Endothelial cell of umbilical vein (primary cell): ENCODE measurements at regions of chr10 and their contacts with region 1.

Region 1: DNA sequence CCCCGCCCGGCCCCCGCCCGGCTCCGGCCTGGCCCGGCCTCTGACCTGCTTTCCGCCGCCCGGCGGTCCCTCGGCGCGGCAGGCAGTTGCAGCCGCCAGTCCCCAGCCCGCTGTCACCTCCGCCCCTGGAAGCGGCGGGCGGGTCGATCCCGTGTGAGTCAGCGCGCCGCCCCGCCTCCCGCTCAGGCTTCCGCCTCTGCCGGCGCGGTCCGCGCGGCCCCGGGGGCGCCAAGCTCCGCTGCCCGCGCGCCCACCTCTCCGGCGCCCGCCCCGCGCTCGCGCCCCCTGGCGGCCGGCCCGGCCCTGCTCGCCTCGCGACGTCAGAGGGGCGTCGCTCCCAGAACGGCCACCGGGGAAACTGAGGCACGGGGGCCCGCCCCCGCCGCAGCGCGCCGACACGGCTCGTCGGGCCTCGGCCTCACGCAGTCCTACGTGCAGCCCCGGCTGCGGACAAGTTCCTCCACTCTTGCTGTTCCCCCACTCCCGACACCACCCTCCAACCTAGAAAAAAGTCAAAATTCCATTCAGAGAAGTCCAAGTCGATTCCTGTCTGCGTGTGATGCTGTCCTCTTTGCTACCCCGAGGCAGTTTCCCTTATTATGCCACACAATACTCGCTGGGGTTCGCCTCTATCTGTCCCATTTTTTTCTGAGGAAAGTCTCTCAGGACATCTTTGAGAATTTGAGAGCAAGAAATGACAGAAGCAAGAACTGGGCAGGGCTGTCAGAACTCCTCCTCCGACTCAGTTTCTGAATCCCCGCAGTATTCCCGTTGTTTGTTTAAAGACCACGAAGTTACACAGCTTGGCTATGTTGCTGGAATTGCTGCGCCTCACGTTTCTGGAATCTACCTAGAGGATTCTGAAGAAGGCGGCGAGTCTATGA is at the start of gene DNMBP:
- DNase-seq: peak; percentile 83
- H3K4me3 ChIP-seq: peak within 1 kb of the TSS; percentile 75 to 99 (median 96)
- H3K27ac ChIP-seq: peak within 1 kb of the TSS; percentile 83
- H3K4me1 ChIP-seq: peaks cover 31% of the 10 kb centered on the region
- H3K27me3 ChIP-seq: no peaks in the 10 kb centered on the region
- CTCF ChIP-seq: peak; percentile 37 to 63
- POLR2A ChIP-seq: peak; percentile 74
- total RNA-seq, gene DNMBP: 53.4 and 56.1 TPM in 2 replicates

Region 2: DNA sequence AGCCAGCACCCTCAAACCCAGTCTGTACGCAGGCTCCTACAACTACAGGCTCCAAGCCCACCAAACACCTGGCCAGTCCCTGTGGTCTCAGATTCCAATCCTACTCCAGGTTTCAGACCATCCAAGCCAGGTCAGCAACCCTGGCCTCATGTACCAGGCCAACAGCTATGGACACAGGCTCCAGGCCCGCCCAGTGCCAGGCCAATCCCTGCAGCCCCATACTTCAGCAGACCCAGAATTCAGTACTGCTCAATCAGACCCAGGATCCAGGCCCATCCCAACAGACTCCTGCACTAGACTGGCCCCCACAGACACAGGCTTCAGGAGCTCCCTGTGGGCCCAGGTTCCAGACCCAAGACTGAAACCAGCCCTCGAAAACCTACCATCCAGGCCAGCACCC is 806.7 kb before region 1 on chr10:
- CTCF ChIA-PET with region 1: no interaction called
- POLR2A ChIA-PET with region 1: no interaction called
- dilution Hi-C with region 1: no loop called
- intact Hi-C with region 1: no loop called
- DNase-seq: no peak
- H3K4me3 ChIP-seq: no peak overlapping the region
- H3K27ac ChIP-seq: no peak overlapping the region
- H3K4me1 ChIP-seq: no peaks in the 10 kb centered on the region
- H3K27me3 ChIP-seq: no peaks in the 10 kb centered on the region
- CTCF ChIP-seq: no peak
- POLR2A ChIP-seq: no peak

Region 3: DNA sequence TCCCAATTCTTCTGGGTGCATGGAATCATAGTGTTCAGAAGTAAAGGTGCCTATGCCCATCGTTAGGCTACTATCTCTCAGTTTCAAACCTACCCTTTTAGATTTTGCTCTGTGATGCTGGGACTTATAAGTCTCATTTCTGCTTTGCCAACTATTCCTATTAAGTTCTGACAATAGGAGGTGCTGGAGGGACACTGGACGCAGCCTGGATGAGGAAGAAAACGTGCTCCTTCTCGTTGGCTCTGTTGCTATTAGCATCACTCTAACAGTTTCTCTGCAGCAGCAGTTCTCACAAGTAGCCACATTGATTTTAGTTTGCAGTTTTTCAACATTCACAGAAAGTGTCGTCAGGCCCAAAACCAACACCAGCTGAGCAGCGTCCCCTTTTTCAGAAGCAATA is 155.2 kb before region 1 on chr10:
- CTCF ChIA-PET with region 1: interaction called, 11 read pairs
- POLR2A ChIA-PET with region 1: no interaction called
- dilution Hi-C with region 1: no loop called
- intact Hi-C with region 1: loop called (anchors 1 kb)
- DNase-seq: peak; percentile 91
- H3K4me3 ChIP-seq: no peak overlapping the region
- H3K27ac ChIP-seq: no peak overlapping the region
- H3K4me1 ChIP-seq: no peaks in the 10 kb centered on the region
- H3K27me3 ChIP-seq: no peaks in the 10 kb centered on the region
- CTCF ChIP-seq: peak; percentile 53 to 66
- POLR2A ChIP-seq: no peak

Region 4: GRCh38 chr10:99917963-99918825 is 91.8 kb before region 1 on chr10:
- CTCF ChIA-PET with region 1: interaction called, 14 read pairs
- POLR2A ChIA-PET with region 1: interaction called, 6 read pairs
- dilution Hi-C with region 1: no loop called
- intact Hi-C with region 1: no loop called
- DNase-seq: peak; percentile 90
- H3K4me3 ChIP-seq: peak overlapping the region in 1 of 3 experiments; percentile 10
- H3K27ac ChIP-seq: peak overlapping the region; percentile 67
- H3K4me1 ChIP-seq: peaks cover 66% of the 10 kb centered on the region
- H3K27me3 ChIP-seq: no peaks in the 10 kb centered on the region
- CTCF ChIP-seq: no peak
- POLR2A ChIP-seq: no peak

Region 5: GRCh38 chr10:99966306-99966705 is 43.7 kb before region 1 on chr10:
- CTCF ChIA-PET with region 1: interaction called, 48 read pairs
- POLR2A ChIA-PET with region 1: interaction called, 19 read pairs
- dilution Hi-C with region 1: no loop called
- intact Hi-C with region 1: loop called (anchors 1 kb)
- DNase-seq: peak; percentile 93
- H3K4me3 ChIP-seq: peak overlapping the region in 1 of 3 experiments; percentile 6
- H3K27ac ChIP-seq: peak overlapping the region; percentile 96
- H3K4me1 ChIP-seq: peaks cover 69% of the 10 kb centered on the region
- H3K27me3 ChIP-seq: no peaks in the 10 kb centered on the region
- CTCF ChIP-seq: no peak
- POLR2A ChIP-seq: peak; percentile 43

Region 6: DNA sequence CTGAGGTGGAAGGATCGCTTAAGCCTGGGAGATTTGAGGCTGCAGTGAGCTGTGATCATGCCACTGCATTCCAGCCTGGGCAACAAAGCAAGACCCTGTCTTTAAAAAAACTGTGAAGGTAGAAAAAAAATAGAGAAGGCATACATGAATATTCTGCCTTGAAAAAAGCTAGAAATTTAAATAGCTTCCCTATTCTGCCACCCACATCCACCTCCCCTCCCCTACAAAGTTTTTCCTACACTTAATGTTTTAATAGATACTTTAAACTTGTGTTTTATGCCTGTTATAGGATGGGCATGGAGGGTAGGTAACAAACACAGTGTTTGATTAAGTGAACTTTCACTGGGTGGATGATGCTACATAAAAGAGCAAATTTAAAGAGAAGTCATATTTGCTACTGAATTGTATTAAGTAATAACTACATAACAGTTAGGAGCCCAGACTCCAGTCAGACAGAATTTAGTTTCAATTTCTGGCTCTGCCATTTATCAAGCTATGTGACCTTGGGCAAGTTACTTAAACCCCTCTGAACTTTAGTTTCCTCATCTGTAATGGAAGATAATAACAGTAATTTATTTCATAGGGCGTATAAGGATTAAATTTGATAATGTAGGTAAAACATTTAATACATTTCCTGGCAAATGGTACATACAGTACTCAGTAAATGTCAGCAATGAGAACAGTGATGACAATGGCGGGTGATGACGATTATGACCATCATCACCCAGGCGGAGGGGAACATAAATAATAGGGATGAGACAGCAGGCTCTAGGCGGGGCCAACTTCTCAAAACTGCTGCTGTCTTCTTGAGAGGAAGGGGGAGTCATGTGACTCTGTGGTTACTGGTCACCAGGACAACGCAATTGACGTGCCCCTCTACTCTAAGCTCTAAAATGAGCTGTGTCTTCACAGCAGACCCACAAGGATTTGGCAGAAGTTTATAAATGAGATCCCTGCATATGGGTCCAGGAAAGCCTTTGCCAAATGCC is 16.0 kb before region 1 on chr10:
- CTCF ChIA-PET with region 1: interaction called, 29 read pairs
- POLR2A ChIA-PET with region 1: interaction called, 9 read pairs
- dilution Hi-C with region 1: no loop called
- intact Hi-C with region 1: loop called (anchors 1 kb)
- DNase-seq: peak; percentile 70
- H3K4me3 ChIP-seq: no peak overlapping the region
- H3K27ac ChIP-seq: peak overlapping the region; percentile 66
- H3K4me1 ChIP-seq: peaks cover 38% of the 10 kb centered on the region
- H3K27me3 ChIP-seq: no peaks in the 10 kb centered on the region
- CTCF ChIP-seq: no peak
- POLR2A ChIP-seq: no peak

Region 7: DNA sequence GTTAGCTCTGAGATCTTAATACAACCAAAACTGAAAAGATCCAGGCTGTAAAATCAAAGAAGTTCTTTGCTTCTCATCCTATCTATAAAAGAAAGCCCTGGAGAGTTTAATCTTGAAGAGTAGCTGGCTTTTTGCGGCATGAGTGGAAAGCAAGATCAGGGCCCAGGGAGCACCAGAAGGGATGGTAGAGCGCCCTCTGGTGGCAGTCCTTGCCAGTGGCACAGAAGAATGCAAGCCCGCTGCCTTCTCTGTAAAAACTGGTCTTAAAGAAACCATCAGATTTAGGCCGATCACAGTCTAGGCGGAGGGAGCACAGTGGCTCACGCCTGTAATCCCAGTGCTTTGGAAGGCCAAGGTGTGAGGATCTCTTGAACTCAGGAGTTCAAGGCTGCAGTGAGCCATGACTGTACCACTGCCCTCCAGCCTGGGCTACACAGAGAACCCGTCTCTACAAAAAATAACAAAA is 36.0 kb after region 1 on chr10:
- CTCF ChIA-PET with region 1: interaction called, 81 read pairs
- POLR2A ChIA-PET with region 1: no interaction called
- dilution Hi-C with region 1: no loop called
- intact Hi-C with region 1: loop called (anchors 1 kb)
- DNase-seq: peak; percentile 85
- H3K4me3 ChIP-seq: no peak overlapping the region
- H3K27ac ChIP-seq: no peak overlapping the region
- H3K4me1 ChIP-seq: peaks cover 19% of the 10 kb centered on the region
- H3K27me3 ChIP-seq: no peaks in the 10 kb centered on the region
- CTCF ChIP-seq: peak; percentile 88 to 94
- POLR2A ChIP-seq: no peak